GM13976 (cell line): ENCODE measurements at regions of chr12 and their contacts with region 1.

Region 1: GRCh38 chr12:125890971-125891370 is 825.7 kb downstream of the AACS start:
- DNase-seq: no peak
- CTCF ChIP-seq: no peak

Region 2: GRCh38 chr12:125797421-125798175 is 93.4 kb before region 1 on chr12:
- in situ Hi-C with region 1: loop called (anchors 25 kb)
- DNase-seq: no peak
- CTCF ChIP-seq: no peak

Region 3: DNA sequence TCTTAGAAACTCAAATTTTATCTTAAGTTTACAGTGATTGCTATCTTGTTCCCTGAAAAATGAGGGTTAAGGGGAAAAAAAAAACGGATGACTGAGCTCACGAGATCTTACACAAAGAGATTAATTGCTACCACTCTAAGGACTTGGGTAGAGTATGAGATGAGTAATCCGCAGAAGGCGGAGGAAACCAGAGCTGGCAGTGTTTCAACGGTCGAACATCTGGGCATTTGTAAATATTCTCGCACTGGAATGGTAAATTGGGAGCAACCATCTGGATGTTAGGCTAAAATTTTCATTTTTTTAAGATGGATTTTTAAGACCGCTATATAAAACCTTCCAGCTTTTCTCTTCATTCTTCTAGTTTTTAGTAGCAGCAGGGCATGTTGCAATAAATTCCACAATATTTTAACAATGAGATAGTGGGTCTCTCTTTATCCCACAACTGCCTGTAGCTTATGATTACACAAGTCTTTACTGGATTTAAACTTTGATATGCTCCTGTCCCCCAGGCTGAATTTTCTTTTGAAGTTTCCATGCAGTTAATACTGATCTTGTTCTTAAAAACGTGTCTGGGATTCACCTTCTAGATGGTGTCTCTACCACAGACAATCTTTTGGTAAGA is 498.4 kb after region 1 on chr12:
- in situ Hi-C with region 1: no loop called
- DNase-seq: no peak
- CTCF ChIP-seq: no peak